ENCODE measurements at regions of chr10 and their contacts with region 1.

Region 1: GRCh38 chr10:15106352-15107013 is 9.3 kb downstream of the RPP38 start:
- DNase-seq: peak; percentile 16 to 77 (median 73)
- ATAC-seq: peak; percentile 99
- H3K4me3 ChIP-seq: no peak overlapping the region
- H3K4me3 Mint-ChIP-seq: no peak overlapping the region
- H3K27ac ChIP-seq: no peak overlapping the region
- H3K27ac Mint-ChIP-seq: peak overlapping the region; percentile 22
- H3K4me1 ChIP-seq: peaks cover 4% of the 10 kb centered on the region
- H3K4me1 Mint-ChIP-seq: peaks cover 10% of the 10 kb centered on the region
- H3K27me3 ChIP-seq: no peaks in the 10 kb centered on the region
- H3K27me3 Mint-ChIP-seq: no peaks in the 10 kb centered on the region
- CTCF ChIP-seq: peak; percentile 94

Region 2: DNA sequence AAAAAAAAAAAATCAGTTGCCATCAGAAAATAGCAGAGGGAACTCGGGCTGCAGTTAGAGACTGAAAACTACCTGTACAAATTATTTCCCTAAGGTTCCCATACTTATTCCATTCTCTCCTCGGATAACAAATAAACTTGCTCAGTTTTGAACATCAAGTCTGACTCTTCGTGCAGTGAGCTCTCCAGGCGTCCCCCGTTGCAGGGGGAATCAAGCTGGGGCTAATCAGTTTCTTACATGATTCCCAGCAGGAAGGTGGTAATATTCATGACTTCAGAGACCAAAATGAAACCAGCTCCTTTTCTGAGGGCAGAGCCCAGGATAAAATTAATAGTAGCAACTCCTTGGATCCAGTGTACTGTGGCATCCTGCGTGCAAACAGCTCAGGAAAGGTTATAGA is 911.0 kb before region 1 on chr10:
- CTCF ChIA-PET with region 1: no interaction called
- POLR2A ChIA-PET with region 1: no interaction called
- intact Hi-C with region 1: loop called (anchors 1 to 5 kb)
- DNase-seq: no peak
- ATAC-seq: no peak
- H3K4me3 ChIP-seq: no peak overlapping the region
- H3K4me3 Mint-ChIP-seq: no peak overlapping the region
- H3K27ac ChIP-seq: no peak overlapping the region
- H3K27ac Mint-ChIP-seq: no peak overlapping the region
- H3K4me1 ChIP-seq: no peaks in the 10 kb centered on the region
- H3K4me1 Mint-ChIP-seq: no peaks in the 10 kb centered on the region
- H3K27me3 ChIP-seq: peaks cover 2 to 3% of the 10 kb centered on the region in 2 experiments
- H3K27me3 Mint-ChIP-seq: peaks cover 36% of the 10 kb centered on the region
- CTCF ChIP-seq: no peak

Region 3: GRCh38 chr10:14200698-14201544 is 905.6 kb before region 1 on chr10:
- CTCF ChIA-PET with region 1: no interaction called
- POLR2A ChIA-PET with region 1: no interaction called
- intact Hi-C with region 1: loop called (anchors 1 to 5 kb)
- DNase-seq: no peak
- ATAC-seq: no peak
- H3K4me3 ChIP-seq: no peak overlapping the region
- H3K4me3 Mint-ChIP-seq: no peak overlapping the region
- H3K27ac ChIP-seq: no peak overlapping the region
- H3K27ac Mint-ChIP-seq: no peak overlapping the region
- H3K4me1 ChIP-seq: no peaks in the 10 kb centered on the region
- H3K4me1 Mint-ChIP-seq: no peaks in the 10 kb centered on the region
- H3K27me3 ChIP-seq: peaks cover 0 to 2% of the 10 kb centered on the region in 2 experiments
- H3K27me3 Mint-ChIP-seq: peaks cover 17% of the 10 kb centered on the region
- CTCF ChIP-seq: no peak

Region 4: GRCh38 chr10:14500172-14500765 is 606.2 kb before region 1 on chr10:
- CTCF ChIA-PET with region 1: interaction called, 3 read pairs
- POLR2A ChIA-PET with region 1: no interaction called
- intact Hi-C with region 1: loop called (anchors 2 to 5 kb)
- DNase-seq: no peak
- ATAC-seq: no peak
- H3K4me3 ChIP-seq: no peak overlapping the region
- H3K4me3 Mint-ChIP-seq: no peak overlapping the region
- H3K27ac ChIP-seq: no peak overlapping the region
- H3K27ac Mint-ChIP-seq: no peak overlapping the region
- H3K4me1 ChIP-seq: peaks cover 9% of the 10 kb centered on the region
- H3K4me1 Mint-ChIP-seq: peaks cover 6% of the 10 kb centered on the region
- H3K27me3 ChIP-seq: no peaks in the 10 kb centered on the region
- H3K27me3 Mint-ChIP-seq: no peaks in the 10 kb centered on the region
- CTCF ChIP-seq: no peak

Region 5: GRCh38 chr10:15035385-15036301 is 70.8 kb before region 1 on chr10:
- CTCF ChIA-PET with region 1: no interaction called
- POLR2A ChIA-PET with region 1: no interaction called
- intact Hi-C with region 1: no loop called
- DNase-seq: peak in 1 of 9 experiments; percentile 23
- ATAC-seq: no peak
- H3K4me3 ChIP-seq: no peak overlapping the region
- H3K4me3 Mint-ChIP-seq: no peak overlapping the region
- H3K27ac ChIP-seq: no peak overlapping the region
- H3K27ac Mint-ChIP-seq: no peak overlapping the region
- H3K4me1 ChIP-seq: no peaks in the 10 kb centered on the region
- H3K4me1 Mint-ChIP-seq: no peaks in the 10 kb centered on the region
- H3K27me3 ChIP-seq: no peaks in the 10 kb centered on the region
- H3K27me3 Mint-ChIP-seq: no peaks in the 10 kb centered on the region
- CTCF ChIP-seq: no peak

Region 6: GRCh38 chr10:15118615-15119014 is 12.1 kb after region 1 on chr10:
- CTCF ChIA-PET with region 1: interaction called, 10 read pairs
- POLR2A ChIA-PET with region 1: no interaction called
- intact Hi-C with region 1: no loop called
- DNase-seq: no peak
- ATAC-seq: no peak
- H3K4me3 ChIP-seq: no peak overlapping the region
- H3K4me3 Mint-ChIP-seq: no peak overlapping the region
- H3K27ac ChIP-seq: no peak overlapping the region
- H3K27ac Mint-ChIP-seq: no peak overlapping the region
- H3K4me1 ChIP-seq: no peaks in the 10 kb centered on the region
- H3K4me1 Mint-ChIP-seq: peaks cover 1% of the 10 kb centered on the region
- H3K27me3 ChIP-seq: no peaks in the 10 kb centered on the region
- H3K27me3 Mint-ChIP-seq: no peaks in the 10 kb centered on the region
- CTCF ChIP-seq: no peak

Region 7: GRCh38 chr10:15196021-15196834 is 89.7 kb after region 1 on chr10:
- CTCF ChIA-PET with region 1: no interaction called
- POLR2A ChIA-PET with region 1: no interaction called
- intact Hi-C with region 1: no loop called
- DNase-seq: peak in 2 of 9 experiments; percentile 30 to 56
- ATAC-seq: no peak
- H3K4me3 ChIP-seq: no peak overlapping the region
- H3K4me3 Mint-ChIP-seq: peak overlapping the region; percentile 43
- H3K27ac ChIP-seq: no peak overlapping the region
- H3K27ac Mint-ChIP-seq: peak overlapping the region; percentile 60
- H3K4me1 ChIP-seq: peaks cover 14% of the 10 kb centered on the region
- H3K4me1 Mint-ChIP-seq: peaks cover 28% of the 10 kb centered on the region
- H3K27me3 ChIP-seq: no peaks in the 10 kb centered on the region
- H3K27me3 Mint-ChIP-seq: no peaks in the 10 kb centered on the region
- CTCF ChIP-seq: no peak

Region 8: GRCh38 chr10:15209827-15210509 is 103.5 kb after region 1 on chr10:
- CTCF ChIA-PET with region 1: interaction called, 3 read pairs
- POLR2A ChIA-PET with region 1: no interaction called
- intact Hi-C with region 1: loop called (anchors 5 kb)
- DNase-seq: peak; percentile 58 to 90 (median 84)
- ATAC-seq: peak; percentile 61
- H3K4me3 ChIP-seq: no peak overlapping the region
- H3K4me3 Mint-ChIP-seq: peak overlapping the region; percentile 70
- H3K27ac ChIP-seq: no peak overlapping the region
- H3K27ac Mint-ChIP-seq: peak overlapping the region; percentile 73
- H3K4me1 ChIP-seq: peaks cover 30% of the 10 kb centered on the region
- H3K4me1 Mint-ChIP-seq: peaks cover 60% of the 10 kb centered on the region
- H3K27me3 ChIP-seq: no peaks in the 10 kb centered on the region
- H3K27me3 Mint-ChIP-seq: no peaks in the 10 kb centered on the region
- CTCF ChIP-seq: peak; percentile 90

Region 9: DNA sequence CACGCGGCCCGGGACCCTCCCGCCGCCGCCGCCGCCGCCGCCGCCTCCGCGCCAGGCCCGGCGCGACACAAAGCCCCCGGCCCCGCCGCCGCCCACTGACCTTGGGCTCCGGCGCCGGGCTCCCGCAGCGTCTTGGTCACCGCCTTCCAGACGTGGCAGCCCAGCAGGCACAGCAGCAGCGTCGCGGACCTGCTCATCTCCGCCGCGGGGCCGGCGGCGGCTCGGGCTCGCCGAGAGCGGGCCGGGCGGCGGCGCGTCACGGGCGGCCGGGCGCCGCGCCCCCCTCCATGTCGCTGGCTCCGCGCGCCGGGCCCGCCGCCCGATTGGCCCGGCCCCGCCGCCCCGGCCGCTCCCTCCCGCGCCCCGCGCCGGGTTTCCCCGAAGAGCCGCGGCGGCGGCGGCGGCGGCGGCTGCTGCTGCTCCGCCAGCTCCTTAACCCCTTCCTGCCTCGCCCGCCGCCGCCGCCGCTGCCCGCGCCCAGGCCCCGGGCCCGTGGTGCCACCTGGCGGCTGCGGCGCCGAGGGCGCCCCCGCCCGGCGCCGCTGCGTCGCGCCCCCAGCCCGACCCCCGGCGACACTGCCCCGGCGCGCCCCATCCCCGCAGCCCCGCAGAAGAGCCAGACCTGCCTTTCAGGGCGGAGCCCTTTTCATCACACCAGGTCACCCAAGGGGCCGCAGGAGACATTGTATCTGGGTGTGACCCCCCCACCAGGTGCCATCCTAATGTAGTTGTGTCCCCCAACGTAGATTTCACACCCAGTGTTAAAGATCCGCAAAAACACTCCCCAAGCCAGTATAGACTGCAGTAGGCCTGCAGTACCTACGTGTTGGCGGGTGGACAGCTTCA is 264.6 kb after region 1 on chr10 and contains the start of gene FAM171A1:
- CTCF ChIA-PET with region 1: no interaction called
- POLR2A ChIA-PET with region 1: no interaction called
- intact Hi-C with region 1: loop called in 1 of 2 experiments (anchors 10 kb)
- DNase-seq: peak; percentile 12 to 80 (median 57)
- ATAC-seq: peak; percentile 78
- H3K4me3 ChIP-seq: peak within 1 kb of the TSS; percentile 25 to 33
- H3K4me3 Mint-ChIP-seq: peak within 1 kb of the TSS; percentile 80
- H3K27ac ChIP-seq: no peak within 1 kb of the TSS
- H3K27ac Mint-ChIP-seq: no peak within 1 kb of the TSS
- H3K4me1 ChIP-seq: peaks cover 9% of the 10 kb centered on the region
- H3K4me1 Mint-ChIP-seq: peaks cover 12% of the 10 kb centered on the region
- H3K27me3 ChIP-seq: peaks cover 0 to 9% of the 10 kb centered on the region in 2 experiments
- H3K27me3 Mint-ChIP-seq: peaks cover 33% of the 10 kb centered on the region
- CTCF ChIP-seq: no peak
- total RNA-seq, gene FAM171A1: 1.7 TPM